ENCODE measurements at regions of chr5 and their contacts with region 1.

Region 1: DNA sequence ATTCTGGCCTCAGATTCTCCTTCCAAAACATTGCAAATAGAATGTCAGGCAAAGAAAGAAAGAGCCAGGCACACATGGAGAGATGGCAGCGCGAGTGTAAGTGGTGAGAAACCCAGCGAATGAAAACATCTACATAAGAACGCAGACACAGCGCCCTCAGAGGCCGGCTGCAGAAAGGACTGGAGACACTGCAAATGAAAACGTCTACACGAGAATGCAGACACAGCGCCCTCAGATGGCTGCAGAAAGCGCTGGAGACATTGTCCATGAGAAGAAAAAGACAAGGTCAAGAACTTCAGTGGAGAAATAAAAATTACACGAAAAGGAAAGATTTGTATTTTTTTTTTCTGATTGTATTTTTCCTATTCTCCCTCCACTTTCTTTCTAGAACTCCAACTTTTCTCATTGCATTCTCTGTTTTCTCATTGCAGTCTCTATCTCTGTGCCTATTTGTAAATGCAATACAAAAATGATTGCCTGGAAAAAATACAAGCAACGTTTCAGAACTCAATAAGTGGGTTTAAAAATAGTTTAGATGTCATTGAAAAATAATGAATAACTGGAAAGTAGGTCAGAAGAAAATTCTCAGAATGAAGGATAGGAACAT is 117.9 kb upstream of the LPCAT1 start:
- DNase-seq: peak; percentile 90
- H3K4me3 ChIP-seq: no peak overlapping the region
- H3K27ac ChIP-seq: no peak overlapping the region
- H3K4me1 ChIP-seq: peaks cover 0 to 15% (median 7%) of the 10 kb centered on the region in 4 donors
- H3K27me3 ChIP-seq: peaks cover 12 to 29% (median 16%) of the 10 kb centered on the region in 3 donors
- CTCF ChIP-seq: peak; percentile 71 to 86 (median 78)
- EP300 ChIP-seq: no peak
- POLR2A ChIP-seq: no peak

Region 2: DNA sequence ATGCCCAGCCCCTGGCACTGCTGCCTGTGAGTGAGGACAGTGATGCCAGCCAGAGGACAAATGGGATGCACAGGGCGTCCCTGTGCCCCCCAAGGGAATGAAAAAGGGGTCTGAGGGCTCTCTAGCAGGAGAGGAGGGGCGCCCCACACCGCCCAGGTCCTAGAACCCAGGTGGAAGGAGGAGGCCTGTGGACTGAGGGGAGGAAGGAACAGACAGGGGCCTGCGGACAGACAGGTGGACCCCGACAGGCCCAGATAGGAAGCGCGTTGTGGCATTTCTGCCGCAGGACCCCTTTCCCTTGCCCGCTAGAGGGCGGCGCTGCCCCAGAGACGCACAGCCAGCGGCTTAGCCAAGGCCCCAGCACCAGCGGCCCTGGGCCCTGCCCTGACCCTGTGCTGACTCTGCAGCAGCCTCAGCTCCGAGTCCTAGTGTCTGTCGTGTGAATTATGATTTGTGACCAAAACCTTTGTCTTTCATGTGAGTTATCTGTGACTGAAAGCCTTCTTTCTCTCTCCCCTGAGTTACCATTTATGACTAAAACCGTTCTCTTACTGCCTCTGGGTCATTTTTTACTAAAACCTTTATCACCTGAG is 718.3 kb before region 1 on chr5:
- intact Hi-C with region 1: loop called (anchors 10 kb)
- DNase-seq: peak; percentile 89
- H3K4me3 ChIP-seq: no peak overlapping the region
- H3K27ac ChIP-seq: no peak overlapping the region
- H3K4me1 ChIP-seq: peaks cover 0 to 14% (median 13%) of the 10 kb centered on the region in 4 donors
- H3K27me3 ChIP-seq: peaks cover 0 to 15% (median 11%) of the 10 kb centered on the region in 3 donors
- CTCF ChIP-seq: peak; percentile 68 to 93 (median 80)
- EP300 ChIP-seq: no peak
- POLR2A ChIP-seq: no peak

Region 3: DNA sequence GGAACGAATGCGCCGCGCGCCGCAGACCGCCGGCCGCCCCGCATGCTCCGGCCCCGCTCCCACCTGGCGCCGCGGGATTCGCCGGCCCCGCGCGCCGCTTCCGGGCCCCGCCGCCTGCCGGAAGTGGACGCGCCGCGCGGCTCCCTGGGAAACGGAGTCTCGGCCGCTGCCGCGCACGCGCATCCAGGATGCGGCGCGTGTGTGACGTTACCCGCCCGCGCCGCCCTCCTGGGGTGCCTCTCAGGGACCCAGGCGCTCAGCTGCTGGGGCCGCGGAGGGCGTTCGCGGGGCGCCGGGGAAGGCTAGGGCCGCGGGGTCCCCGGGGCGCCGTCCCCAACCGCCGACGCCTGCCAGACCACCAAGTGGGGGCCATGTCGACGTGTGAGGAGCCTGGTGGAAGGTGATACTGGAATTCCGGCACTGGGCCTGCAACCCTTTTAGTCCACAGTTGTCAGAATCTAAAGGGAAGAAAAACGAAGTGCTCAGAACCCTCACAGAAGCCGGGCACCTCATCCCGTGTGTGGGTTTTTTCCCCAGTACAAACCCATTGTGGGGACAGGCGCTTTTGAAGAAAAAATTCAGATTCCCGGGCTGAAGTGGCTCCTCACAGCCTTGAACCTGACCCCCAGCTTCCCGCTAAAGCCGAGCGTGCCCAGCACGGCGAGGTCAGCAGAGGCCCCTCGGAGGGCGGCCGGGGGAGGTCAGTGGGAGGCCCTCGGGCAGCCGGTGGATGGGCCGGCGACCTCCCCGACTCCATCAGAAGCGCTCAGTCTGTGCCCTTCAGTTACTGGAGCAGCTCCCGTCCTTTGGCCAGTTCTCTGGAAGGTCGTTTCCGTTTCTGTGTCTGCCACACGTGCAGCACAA is 296.5 kb before region 1 on chr5 and contains the start of gene CLPTM1L:
- intact Hi-C with region 1: loop called (anchors 2 kb)
- DNase-seq: peak; percentile 92
- H3K4me3 ChIP-seq: peak within 1 kb of the TSS; percentile 71 to 99 (median 86)
- H3K27ac ChIP-seq: peak within 1 kb of the TSS; percentile 83 to 94 (median 90)
- H3K4me1 ChIP-seq: peaks cover 0 to 33% (median 23%) of the 10 kb centered on the region in 4 donors
- H3K27me3 ChIP-seq: no peaks in the 10 kb centered on the region
- CTCF ChIP-seq: no peak
- EP300 ChIP-seq: no peak
- POLR2A ChIP-seq: peak; percentile 62 to 63
- total RNA-seq, gene CLPTM1L: 49.5 to 67.8 (median 58.9) TPM

Region 4: GRCh38 chr5:1437226-1437851 is 204.3 kb before region 1 on chr5:
- intact Hi-C with region 1: no loop called
- DNase-seq: no peak
- H3K4me3 ChIP-seq: no peak overlapping the region
- H3K27ac ChIP-seq: no peak overlapping the region
- H3K4me1 ChIP-seq: no peaks in the 10 kb centered on the region
- H3K27me3 ChIP-seq: peaks cover 2 to 42% (median 22%) of the 10 kb centered on the region in 3 donors
- CTCF ChIP-seq: no peak
- EP300 ChIP-seq: no peak
- POLR2A ChIP-seq: no peak

Region 5: DNA sequence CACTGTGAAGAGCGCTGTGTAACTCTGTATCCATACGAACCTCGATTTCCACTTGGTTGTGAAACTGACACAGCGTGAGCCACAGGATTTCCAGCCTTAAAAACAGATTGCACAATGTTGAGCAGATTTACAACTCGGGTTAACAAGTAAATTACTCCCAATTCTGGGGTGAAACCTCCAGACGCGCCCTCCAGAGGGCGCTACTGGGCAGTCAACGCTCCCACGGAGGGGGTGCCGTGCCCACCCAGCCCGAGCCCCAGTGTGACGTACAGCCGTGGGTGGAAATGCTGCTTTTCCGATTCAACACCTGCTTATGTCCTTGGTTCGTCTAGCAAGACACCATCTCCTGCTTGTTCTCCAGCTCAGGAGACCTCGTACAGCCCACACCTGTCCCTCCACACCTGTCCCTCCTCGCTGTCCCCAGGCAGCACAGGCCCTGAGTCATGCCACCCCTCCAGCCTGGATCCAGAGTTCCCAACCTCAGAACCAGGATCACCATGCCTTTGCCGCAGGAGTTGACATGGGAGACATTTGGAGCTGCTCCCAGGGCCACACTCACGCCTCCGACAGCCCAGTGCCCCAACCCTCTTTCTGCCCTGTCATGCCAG is 162.0 kb before region 1 on chr5:
- intact Hi-C with region 1: loop called (anchors 5 kb)
- DNase-seq: no peak
- H3K4me3 ChIP-seq: no peak overlapping the region
- H3K27ac ChIP-seq: peak overlapping the region in 2 of 4 donors; percentile 14 to 59
- H3K4me1 ChIP-seq: peaks cover 0 to 11% (median 3%) of the 10 kb centered on the region in 4 donors
- H3K27me3 ChIP-seq: no peaks in the 10 kb centered on the region
- CTCF ChIP-seq: peak in 3 of 4 experiments; percentile 43 to 66 (median 44)
- EP300 ChIP-seq: peak in 1 of 4 donors; percentile 65
- POLR2A ChIP-seq: no peak

Region 6: DNA sequence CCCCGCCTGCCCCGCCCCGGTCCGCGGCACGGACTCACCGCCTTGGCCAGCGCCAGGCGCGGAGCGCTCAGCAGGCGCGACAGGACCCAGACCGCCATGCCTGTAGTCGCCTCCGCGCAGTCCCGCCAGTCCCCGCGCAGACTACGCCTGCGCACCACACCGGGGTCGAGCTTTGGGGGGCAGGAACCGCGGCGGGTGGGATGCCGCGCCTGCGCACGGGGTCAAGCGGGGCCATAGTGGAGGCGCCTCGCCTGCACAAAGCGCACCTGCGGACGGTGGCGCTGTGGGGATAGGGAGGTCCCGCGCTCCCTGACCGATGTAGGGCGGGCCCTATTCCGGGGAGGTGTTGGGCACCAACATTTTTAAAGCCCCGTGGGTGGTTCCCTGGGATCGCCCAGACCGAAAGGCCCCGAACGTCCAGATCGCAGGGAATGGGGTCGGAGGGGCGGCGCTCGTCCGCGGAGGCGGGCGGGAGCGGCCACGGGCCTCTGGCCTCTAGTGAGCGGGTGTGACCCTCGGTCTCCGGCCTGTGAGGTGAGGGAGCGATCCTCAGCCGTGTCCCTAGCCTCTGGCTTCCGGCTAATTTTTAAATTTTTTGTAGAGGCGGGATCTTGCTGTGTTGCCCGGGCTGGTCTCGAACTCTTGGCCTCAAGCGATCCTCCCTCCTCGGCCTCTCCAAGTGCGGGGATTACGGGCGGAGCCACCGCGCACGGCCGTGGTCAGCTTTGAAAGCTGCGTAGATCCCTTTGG is 47.1 kb before region 1 on chr5:
- intact Hi-C with region 1: loop called (anchors 10 kb)
- DNase-seq: peak; percentile 89
- H3K4me3 ChIP-seq: peak overlapping the region; percentile 35 to 65 (median 64)
- H3K27ac ChIP-seq: peak overlapping the region; percentile 76 to 79 (median 78)
- H3K4me1 ChIP-seq: peaks cover 0 to 8% (median 2%) of the 10 kb centered on the region in 4 donors
- H3K27me3 ChIP-seq: no peaks in the 10 kb centered on the region
- CTCF ChIP-seq: peak in 3 of 4 experiments; percentile 15 to 28 (median 26)
- EP300 ChIP-seq: no peak
- POLR2A ChIP-seq: no peak

Measured in sigmoid colon (tissue), 7 donors.